Right cardiac atrium (tissue), 5 donors: ENCODE measurements at regions of chr1 and their contacts with region 1.

Region 1: GRCh38 chr1:193013005-193013404 is 46.2 kb downstream of the UCHL5 start:
- DNase-seq: no peak
- ATAC-seq: peak; percentile 43 to 52
- H3K4me3 ChIP-seq: no peak overlapping the region
- H3K27ac ChIP-seq: no peak overlapping the region
- H3K4me1 ChIP-seq: no peaks in the 10 kb centered on the region
- H3K27me3 ChIP-seq: no peaks in the 10 kb centered on the region

Region 2: DNA sequence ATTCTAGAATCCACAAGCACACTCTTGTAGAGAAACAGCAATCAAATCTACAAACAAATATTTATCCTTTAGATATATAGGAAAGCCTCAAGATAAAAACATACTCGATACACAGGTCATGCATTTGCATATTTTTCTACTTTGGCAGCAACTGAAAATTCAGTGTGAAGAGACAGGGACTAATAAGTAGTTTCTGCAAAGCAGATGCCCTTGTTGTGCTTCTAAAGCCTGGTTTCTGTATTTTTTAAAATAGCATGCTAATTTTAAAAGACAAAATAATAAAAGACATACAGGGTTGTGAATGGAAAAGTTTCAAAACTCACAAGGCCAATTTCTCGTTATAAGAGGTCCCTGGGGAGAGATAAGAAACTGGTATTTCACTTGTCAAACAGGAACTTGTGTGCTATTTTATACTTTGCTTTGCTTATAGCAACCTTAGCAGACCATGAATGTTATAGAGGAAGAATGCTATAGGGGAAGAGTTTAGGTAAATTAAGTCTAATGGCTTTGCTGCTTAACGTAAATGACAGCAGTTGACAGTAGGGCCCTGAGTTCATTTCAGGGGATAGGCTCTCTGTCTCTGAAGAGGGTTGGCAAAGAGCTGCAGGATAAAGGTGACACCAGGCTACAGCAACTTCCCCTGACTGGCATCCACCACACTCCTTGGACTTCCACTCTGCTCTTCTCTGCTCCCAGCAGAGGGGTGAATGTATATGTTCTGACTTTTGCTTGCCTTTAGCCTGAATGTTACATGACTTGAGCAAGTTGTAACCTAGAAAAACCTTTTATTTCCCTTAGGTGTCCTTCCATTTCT is 386.4 kb before region 1 on chr1:
- intact Hi-C with region 1: loop called in 1 of 4 experiments (anchors 5 kb)
- DNase-seq: no peak
- ATAC-seq: peak in 1 of 2 donors; percentile 60
- H3K4me3 ChIP-seq: no peak overlapping the region
- H3K27ac ChIP-seq: no peak overlapping the region
- H3K4me1 ChIP-seq: no peaks in the 10 kb centered on the region
- H3K27me3 ChIP-seq: no peaks in the 10 kb centered on the region